Heart left ventricle (tissue), 16 donors: ENCODE measurements at regions of chr14 and their contacts with region 1.

Region 1: DNA sequence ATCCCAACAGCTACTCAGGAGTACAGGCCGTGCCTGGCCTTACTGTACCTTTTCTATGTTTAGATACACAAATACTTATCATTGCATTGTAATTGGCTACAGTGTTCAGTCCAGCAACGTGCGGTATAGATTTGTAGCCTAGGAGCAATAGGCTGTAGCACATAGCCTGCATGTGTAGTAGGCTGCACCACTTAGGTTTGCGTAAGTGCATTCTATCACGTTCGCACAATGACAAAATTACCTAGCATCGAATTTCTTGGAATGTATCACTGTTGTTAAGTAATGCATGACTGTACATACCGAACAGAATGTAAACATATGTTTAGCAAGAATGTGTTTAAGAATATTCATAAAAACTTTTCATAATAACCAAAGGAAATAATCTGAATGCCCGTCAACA is 31.9 kb downstream of the VRTN start:
- DNase-seq: no peak
- ATAC-seq: no peak
- H3K4me3 ChIP-seq: no peak overlapping the region
- H3K27ac ChIP-seq: no peak overlapping the region
- H3K4me1 ChIP-seq: no peaks in the 10 kb centered on the region
- H3K27me3 ChIP-seq: peaks cover 0 to 5% (median 0%) of the 10 kb centered on the region in 9 donors
- CTCF ChIP-seq: no peak
- POLR2A ChIP-seq: no peak

Region 2: GRCh38 chr14:74469548-74470518 is 89.7 kb after region 1 on chr14:
- intact Hi-C with region 1: loop called in 2 of 10 experiments (anchors 5 kb)
- DNase-seq: no peak
- ATAC-seq: peak in 1 of 4 donors; percentile 22
- H3K4me3 ChIP-seq: no peak overlapping the region
- H3K27ac ChIP-seq: peak overlapping the region in 1 of 12 donors; percentile 18
- H3K4me1 ChIP-seq: peaks cover 0 to 10% (median 0%) of the 10 kb centered on the region in 12 donors
- H3K27me3 ChIP-seq: no peaks in the 10 kb centered on the region
- CTCF ChIP-seq: no peak
- POLR2A ChIP-seq: no peak

Region 3: GRCh38 chr14:74478996-74479635 is 99.0 kb after region 1 on chr14:
- intact Hi-C with region 1: loop called in 1 of 10 experiments (anchors 5 kb)
- DNase-seq: no peak
- ATAC-seq: peak in 1 of 4 donors; percentile 30
- H3K4me3 ChIP-seq: no peak overlapping the region
- H3K27ac ChIP-seq: no peak overlapping the region
- H3K4me1 ChIP-seq: peaks cover 0 to 17% (median 5%) of the 10 kb centered on the region in 12 donors
- H3K27me3 ChIP-seq: no peaks in the 10 kb centered on the region
- CTCF ChIP-seq: peak; percentile 41 to 70 (median 62)
- POLR2A ChIP-seq: no peak

Region 4: GRCh38 chr14:74501135-74501614 is 121.0 kb after region 1 on chr14:
- intact Hi-C with region 1: no loop called
- DNase-seq: peak; percentile 49 to 80 (median 68)
- ATAC-seq: peak; percentile 5 to 65 (median 38)
- H3K4me3 ChIP-seq: no peak overlapping the region
- H3K27ac ChIP-seq: no peak overlapping the region
- H3K4me1 ChIP-seq: peaks cover 0 to 8% (median 0%) of the 10 kb centered on the region in 12 donors
- H3K27me3 ChIP-seq: no peaks in the 10 kb centered on the region
- CTCF ChIP-seq: peak; percentile 25 to 68 (median 51)
- POLR2A ChIP-seq: no peak